AG04450 (cell line): ENCODE measurements at regions of chr3 and their contacts with region 1.

Region 1: GRCh38 chr3:4493014-4493940 is at the start of gene ITPR1:
- DNase-seq: peak; percentile 99
- H3K4me3 ChIP-seq: peak within 1 kb of the TSS; percentile 83
- H3K27ac ChIP-seq: peak within 1 kb of the TSS; percentile 11
- H3K27me3 ChIP-seq: peaks cover 9% of the 10 kb centered on the region
- CTCF ChIP-seq: no peak
- polyA plus RNA-seq, gene ITPR1: 6.7 and 7.4 TPM in 2 replicates

Region 2: DNA sequence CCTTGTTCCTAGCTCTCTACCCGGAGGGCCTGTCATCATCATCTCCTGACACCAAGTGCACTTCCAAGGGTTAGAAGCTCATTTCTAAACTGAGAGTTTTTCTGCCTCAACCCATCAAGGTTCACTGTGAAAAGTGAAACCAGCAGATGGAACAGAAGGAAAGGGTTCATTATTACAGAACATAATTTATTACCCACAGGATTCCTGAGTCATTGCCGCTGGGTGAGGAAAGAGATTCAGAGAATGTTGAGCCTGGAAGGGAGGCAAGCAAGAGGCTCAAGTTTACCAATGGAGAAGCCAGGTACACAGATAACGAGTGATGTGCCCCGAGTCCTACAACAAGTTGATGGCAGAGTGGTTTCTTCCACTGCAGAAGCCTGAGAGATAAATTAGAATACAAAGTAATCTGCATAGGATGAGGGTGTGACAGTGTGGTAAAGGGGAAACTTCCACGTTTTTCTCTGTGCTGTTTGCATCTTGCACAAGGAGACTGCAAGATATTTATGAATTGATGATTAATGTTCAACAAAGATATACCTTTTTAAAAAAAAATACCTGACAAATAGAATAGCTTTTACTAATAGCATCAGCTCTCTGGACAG is 270.6 kb before region 1 on chr3:
- CTCF ChIA-PET with region 1: no interaction called
- POLR2A ChIA-PET with region 1: no interaction called
- DNase-seq: no peak
- H3K4me3 ChIP-seq: no peak overlapping the region
- H3K27ac ChIP-seq: no peak overlapping the region
- H3K27me3 ChIP-seq: no peaks in the 10 kb centered on the region
- CTCF ChIP-seq: no peak

Region 3: DNA sequence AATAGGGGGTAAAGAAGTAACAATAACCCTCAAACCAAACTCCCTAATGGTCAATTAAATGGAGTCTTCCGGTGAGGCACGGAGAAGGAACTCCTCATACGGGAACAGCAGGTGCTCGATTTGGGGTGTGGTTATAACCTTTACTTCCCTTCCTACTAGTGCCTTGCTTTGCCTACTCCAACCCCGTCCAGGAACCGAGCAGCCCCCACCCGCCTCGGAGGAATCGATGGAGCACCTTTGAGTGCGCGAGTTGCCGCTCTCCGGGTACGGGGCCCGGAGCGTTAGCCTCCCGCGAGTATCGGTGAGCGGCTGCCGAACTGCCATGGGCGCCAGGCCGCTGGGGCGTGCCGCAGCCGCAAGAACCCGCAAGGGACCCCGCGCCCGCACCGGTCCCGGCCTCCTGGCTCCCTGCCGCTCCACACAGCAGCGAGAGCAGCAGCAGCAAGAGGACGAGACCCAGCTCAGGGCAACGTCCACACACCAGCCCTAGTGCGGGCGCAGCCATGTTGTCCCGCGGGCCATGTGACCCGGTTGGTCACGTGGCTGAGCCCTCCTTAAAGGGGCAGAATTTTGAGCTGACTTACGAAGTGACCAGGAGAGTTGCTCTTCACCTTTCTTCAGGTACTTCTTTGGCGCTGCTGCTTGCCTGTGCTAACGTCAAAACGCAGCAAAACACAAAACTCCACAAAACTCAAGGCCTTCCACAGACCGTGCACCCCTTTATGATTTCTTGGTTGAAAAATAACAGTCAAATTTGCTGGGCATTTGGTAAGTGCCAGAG is 26.3 kb before region 1 on chr3 and contains the start of gene SUMF1:
- CTCF ChIA-PET with region 1: interaction called, 8 read pairs
- POLR2A ChIA-PET with region 1: interaction called, 38 read pairs
- DNase-seq: peak; percentile 47
- H3K4me3 ChIP-seq: peak within 1 kb of the TSS; percentile 82
- H3K27ac ChIP-seq: peak within 1 kb of the TSS; percentile 54
- H3K27me3 ChIP-seq: peaks cover 6% of the 10 kb centered on the region
- CTCF ChIP-seq: no peak
- polyA plus RNA-seq, gene SUMF1: 46.5 and 51.4 TPM in 2 replicates

Region 4: DNA sequence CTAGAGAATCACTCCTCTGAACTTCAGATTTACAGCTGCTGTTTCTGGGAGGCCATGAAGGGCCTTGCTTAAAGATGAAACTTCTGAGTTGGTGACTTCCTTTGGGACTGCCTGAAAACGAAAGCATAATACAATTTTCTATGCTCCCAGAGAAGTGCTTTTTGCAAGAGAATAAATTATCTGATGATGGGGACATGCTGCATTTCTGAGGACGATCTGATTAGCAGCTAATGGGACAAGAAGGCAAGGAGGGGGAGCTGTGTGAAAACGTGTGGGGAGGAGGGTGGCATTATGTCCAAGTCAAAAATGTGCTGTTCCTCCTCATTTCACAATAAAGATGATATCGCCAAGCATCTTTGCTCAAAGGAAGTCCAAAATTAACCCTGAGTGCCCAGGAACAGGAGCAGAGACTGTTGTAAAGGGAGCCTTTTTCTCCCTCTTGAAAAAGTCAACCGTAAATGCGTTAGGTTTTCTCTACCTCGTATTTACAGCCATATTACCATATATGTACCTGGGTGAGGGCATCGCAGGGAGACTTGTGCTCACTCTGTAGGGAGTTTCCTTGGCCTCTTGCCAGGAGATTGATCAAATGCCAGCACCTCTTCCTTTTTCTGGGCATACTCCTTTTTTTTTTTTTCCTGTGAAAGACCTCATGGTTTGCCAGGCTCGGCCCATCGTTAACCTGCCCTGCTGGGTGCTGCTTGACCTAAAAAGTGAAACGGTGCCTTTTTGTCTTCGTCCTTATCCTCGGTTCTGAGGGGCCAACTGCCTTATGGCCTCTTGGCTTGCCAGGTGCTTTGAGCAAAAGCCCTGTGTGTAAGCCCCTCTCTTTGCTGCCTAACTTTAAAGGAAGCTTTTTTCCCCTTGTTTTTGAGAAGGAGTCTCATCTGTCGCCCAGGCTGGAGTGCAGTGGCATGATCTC is 11.3 kb after region 1 on chr3:
- CTCF ChIA-PET with region 1: interaction called, 7 read pairs
- POLR2A ChIA-PET with region 1: interaction called, 10 read pairs
- DNase-seq: no peak
- H3K4me3 ChIP-seq: no peak overlapping the region; the same call in 1 of the 2 replicates
- H3K27ac ChIP-seq: peak overlapping the region; percentile 12
- H3K27me3 ChIP-seq: no peaks in the 10 kb centered on the region
- CTCF ChIP-seq: no peak

Region 5: GRCh38 chr3:4543110-4543509 is 49.8 kb after region 1 on chr3:
- CTCF ChIA-PET with region 1: interaction called, 3 read pairs
- POLR2A ChIA-PET with region 1: interaction called, 11 read pairs
- DNase-seq: no peak
- H3K4me3 ChIP-seq: no peak overlapping the region
- H3K27ac ChIP-seq: no peak overlapping the region
- H3K27me3 ChIP-seq: no peaks in the 10 kb centered on the region
- CTCF ChIP-seq: no peak

Region 6: DNA sequence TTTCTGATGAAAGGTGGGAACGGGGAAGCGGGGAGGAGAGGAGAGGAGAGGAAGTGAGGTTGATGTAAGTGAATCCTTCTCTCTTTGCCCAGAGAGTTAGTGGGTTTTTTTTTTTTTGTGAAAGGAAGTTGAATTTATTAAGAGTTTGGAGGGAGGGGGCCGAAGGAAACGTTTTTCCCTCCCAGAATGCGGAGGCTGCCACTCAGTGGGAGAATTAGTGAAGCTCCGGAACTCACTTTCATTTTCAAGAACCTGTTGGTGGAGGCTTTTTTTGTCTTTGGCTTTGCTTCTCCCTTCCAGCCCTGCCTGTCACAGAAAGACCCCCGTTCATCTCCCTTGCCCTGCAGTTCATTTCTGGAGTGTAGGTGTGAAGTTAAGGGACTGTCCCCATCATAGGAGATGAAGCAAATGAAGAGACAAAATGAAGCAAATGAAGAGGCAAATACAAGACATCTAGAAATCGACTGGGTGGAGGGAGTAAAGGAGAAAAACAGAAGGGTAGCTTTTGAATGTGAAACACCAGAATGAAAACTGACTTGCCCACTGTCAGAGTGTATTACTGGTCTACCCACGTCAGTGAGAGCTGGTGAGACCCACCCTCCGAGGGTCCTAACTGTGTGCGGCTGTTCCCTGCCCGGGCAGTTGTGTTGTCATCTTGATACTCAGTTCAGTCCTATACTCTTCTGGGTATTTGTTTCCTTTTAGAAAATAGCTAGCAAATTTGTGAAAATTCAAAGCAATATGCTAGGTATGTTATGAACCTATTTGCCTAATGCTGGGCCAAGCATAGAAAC is 91.4 kb after region 1 on chr3:
- CTCF ChIA-PET with region 1: interaction called, 4 read pairs
- POLR2A ChIA-PET with region 1: interaction called, 31 read pairs
- DNase-seq: no peak
- H3K4me3 ChIP-seq: peak overlapping the region; percentile 42
- H3K27ac ChIP-seq: peak overlapping the region; percentile 31
- H3K27me3 ChIP-seq: no peaks in the 10 kb centered on the region
- CTCF ChIP-seq: peak; percentile 18; the same call in 1 of the 2 replicates